Stomach (tissue), 19 donors: ENCODE measurements at regions of chr5 and their contacts with region 1.

Region 1: DNA sequence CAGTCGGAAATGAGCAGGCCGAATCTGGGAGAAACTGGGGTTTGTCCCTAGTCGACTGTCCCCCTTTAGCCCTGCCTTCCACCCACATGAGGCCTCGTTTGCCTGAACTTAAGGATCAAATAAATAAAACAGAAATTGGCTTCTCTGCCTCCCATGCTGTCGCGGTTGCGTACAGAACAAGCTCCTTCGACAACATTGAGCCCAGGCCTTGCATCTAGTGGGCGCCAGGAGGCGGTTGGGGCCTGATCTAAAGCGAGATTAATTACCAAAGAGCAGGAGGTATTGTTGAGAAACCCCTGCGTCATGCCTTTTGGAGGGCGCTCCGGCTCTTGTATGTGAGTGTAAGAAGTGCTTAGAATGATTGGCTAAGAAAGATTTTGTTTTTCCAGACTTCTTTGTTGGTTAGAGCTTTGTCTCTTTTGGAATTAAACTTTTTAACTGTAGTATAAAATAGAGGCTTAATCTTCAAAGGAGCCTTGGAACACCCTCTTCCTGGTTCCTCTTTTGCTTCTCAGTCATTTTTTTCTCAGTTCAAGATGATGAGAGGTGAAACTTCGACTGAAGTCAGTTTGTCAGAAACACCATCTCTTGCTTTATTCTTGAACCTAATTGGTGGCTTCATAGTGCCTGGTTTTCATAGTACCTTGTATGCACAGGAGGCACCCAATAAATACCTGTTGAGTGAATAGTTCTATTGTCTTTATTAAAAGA is 827 bp downstream of the ATP6V0E1 start:
- DNase-seq: peak; percentile 75 to 91
- H3K4me3 ChIP-seq: peak overlapping the region; percentile 69 to 97 (median 91)
- H3K27ac ChIP-seq: peak overlapping the region; percentile 89 to 99 (median 98)
- H3K4me1 ChIP-seq: peaks cover 17 to 48% (median 37%) of the 10 kb centered on the region in 4 donors
- H3K27me3 ChIP-seq: no peaks in the 10 kb centered on the region
- CTCF ChIP-seq: peak in 4 of 7 experiments; percentile 27 to 56 (median 40)
- EP300 ChIP-seq: no peak
- POLR2A ChIP-seq: no peak

Region 2: DNA sequence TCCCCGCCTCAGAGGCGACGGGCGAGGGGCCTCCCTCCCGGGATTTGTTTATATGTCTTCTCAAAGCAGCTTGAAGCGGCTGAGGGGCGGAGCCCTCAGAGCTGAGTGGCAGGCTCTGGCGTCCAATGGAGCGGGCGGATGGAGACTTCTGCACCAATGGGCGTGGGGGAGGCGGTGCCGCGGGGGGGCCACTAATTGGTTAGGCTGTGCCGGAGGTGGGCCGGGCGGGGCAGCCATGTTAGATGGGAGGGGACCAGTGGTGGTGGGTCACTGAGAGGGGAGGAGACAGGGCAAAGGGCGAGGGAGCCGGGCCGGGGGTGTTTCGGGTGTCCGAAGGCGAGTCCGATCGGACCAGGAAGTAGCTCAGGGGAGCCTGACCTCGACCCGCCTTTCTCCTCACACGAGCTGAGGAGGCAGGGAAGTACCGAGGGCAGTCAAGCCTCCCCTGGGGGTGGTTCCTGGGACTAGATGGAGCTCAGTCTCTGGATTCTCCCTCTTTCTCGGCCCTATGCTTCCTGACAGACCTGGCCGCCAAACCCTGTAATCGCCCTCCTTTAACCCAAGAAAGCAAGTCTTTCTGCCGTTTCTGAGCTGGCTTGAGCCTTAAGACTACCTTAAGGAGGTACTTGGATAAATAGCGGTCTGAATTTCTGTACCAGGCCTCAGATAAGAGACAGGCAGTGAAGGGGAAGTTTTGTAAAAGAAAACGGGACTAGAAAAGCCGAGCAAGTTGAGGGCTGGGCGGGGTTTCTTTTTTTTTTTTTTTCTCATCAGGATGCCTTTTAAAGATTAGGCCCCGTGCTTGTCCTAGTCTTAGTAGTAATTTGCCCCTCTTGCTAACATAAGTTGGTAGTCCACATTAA is 72.9 kb after region 1 on chr5:
- intact Hi-C with region 1: loop called (anchors 10 kb)
- DNase-seq: peak; percentile 99 to 100
- H3K4me3 ChIP-seq: peak overlapping the region; percentile 96 to 100 (median 100)
- H3K27ac ChIP-seq: peak overlapping the region; percentile 96 to 100 (median 99)
- H3K4me1 ChIP-seq: peaks cover 13 to 59% (median 40%) of the 10 kb centered on the region in 4 donors
- H3K27me3 ChIP-seq: no peaks in the 10 kb centered on the region
- CTCF ChIP-seq: peak in 2 of 7 experiments; percentile 26 to 32
- EP300 ChIP-seq: no peak
- POLR2A ChIP-seq: no peak

Region 3: GRCh38 chr5:173144200-173145176 is 160.1 kb after region 1 on chr5 and contains the start of gene BNIP1:
- intact Hi-C with region 1: loop called (anchors 10 kb)
- DNase-seq: peak; percentile 99 to 100
- H3K4me3 ChIP-seq: peak within 1 kb of the TSS; percentile 80 to 88 (median 84)
- H3K27ac ChIP-seq: peak within 1 kb of the TSS; percentile 87 to 95 (median 94)
- H3K4me1 ChIP-seq: peaks cover 0 to 24% (median 15%) of the 10 kb centered on the region in 4 donors
- H3K27me3 ChIP-seq: no peaks in the 10 kb centered on the region
- CTCF ChIP-seq: peak in 5 of 7 experiments; percentile 67 to 94 (median 87)
- EP300 ChIP-seq: no peak
- POLR2A ChIP-seq: peak in 2 of 4 donors; percentile 43 to 60
- total RNA-seq, gene BNIP1: 3.6 to 28.0 (median 15.3) TPM in 4 of 5 donors, not detected in the other